ENCODE measurements at regions of chr13 and their contacts with region 1.

Region 1: GRCh38 chr13:19646062-19646461 is 12.6 kb downstream of the MPHOSPH8 start:
- DNase-seq: no peak
- H3K4me3 ChIP-seq: no peak overlapping the region
- H3K4me3 Mint-ChIP-seq: no peak overlapping the region
- H3K27ac Mint-ChIP-seq: no peak overlapping the region
- H3K4me1 ChIP-seq: no peaks in the 10 kb centered on the region
- H3K4me1 Mint-ChIP-seq: no peaks in the 10 kb centered on the region
- H3K27me3 ChIP-seq: no peaks in the 10 kb centered on the region
- H3K27me3 Mint-ChIP-seq: no peaks in the 10 kb centered on the region
- CTCF ChIP-seq: no peak

Region 2: DNA sequence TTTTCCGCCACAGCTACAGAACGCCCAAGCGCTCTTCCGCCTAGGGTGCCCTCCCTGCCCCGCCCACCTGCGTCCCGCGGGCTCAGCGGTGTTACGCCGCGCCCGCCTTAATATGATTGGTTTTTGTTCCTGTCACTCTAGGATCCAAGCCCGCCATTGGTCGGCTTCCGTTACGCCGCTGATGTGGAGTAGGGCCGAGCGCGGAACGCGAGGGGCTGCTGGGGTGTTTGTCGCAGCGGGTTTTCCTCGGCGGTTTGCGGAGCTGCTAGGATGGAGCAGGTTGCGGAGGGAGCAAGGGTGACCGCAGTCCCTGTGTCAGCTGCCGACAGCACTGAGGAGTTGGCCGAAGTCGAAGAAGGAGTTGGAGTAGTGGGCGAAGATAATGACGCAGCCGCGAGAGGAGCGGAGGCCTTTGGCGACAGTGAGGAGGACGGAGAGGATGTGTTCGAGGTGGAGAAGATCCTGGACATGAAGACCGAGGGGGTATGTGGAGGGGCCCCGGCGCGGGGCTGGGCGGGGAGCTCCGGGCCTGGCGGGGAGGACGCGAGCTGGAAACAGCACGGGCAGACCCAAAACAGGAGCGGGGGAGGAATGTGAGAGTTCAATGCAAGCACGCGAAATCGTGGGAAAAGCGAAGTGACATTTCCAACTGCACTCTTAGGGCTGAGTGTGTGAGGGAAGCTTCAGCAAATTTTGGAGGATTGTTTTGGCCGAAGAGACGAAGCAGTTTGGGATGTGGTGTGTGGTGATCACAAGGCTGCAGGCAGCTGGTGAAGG is 12.4 kb before region 1 on chr13 and contains the start of gene MPHOSPH8:
- CTCF ChIA-PET with region 1: no interaction called
- POLR2A ChIA-PET with region 1: no interaction called
- intact Hi-C with region 1: loop called (anchors 2 kb)
- DNase-seq: peak; percentile 97 to 98
- H3K4me3 ChIP-seq: peak within 1 kb of the TSS; percentile 69
- H3K4me3 Mint-ChIP-seq: peak within 1 kb of the TSS; percentile 92
- H3K27ac Mint-ChIP-seq: peak within 1 kb of the TSS; percentile 91
- H3K4me1 ChIP-seq: peaks cover 7% of the 10 kb centered on the region; the same call in 1 of the 2 replicates
- H3K4me1 Mint-ChIP-seq: peaks cover 5% of the 10 kb centered on the region
- H3K27me3 ChIP-seq: no peaks in the 10 kb centered on the region
- H3K27me3 Mint-ChIP-seq: no peaks in the 10 kb centered on the region
- CTCF ChIP-seq: no peak
- total RNA-seq, gene MPHOSPH8: 31.6 and 31.8 TPM in 2 replicates

Region 3: DNA sequence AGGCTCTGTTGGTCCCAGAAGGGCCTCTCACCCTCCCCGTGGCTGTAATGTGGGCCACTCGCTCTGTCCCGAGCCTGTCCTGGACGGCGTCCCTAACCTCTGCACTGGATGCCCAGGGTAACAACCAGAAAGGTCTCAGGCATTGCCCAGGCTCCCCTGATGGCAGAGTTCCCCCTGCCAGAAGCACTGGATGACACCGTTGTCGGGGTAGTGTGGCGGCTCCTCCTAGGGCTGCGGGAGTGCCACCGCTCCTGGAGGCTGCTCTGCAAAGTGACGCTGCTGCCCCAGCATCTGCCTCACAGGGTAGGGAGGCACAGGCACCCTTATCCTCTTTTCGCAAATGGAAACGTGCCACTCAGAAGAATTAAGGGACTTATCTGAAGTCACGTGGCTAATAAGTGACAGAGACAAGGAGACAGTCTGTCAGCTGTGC is 19.4 kb after region 1 on chr13:
- CTCF ChIA-PET with region 1: no interaction called
- POLR2A ChIA-PET with region 1: no interaction called
- intact Hi-C with region 1: no loop called
- DNase-seq: no peak
- H3K4me3 ChIP-seq: no peak overlapping the region
- H3K4me3 Mint-ChIP-seq: no peak overlapping the region
- H3K27ac Mint-ChIP-seq: peak overlapping the region; percentile 58
- H3K4me1 ChIP-seq: no peaks in the 10 kb centered on the region
- H3K4me1 Mint-ChIP-seq: peaks cover 11% of the 10 kb centered on the region
- H3K27me3 ChIP-seq: no peaks in the 10 kb centered on the region
- H3K27me3 Mint-ChIP-seq: no peaks in the 10 kb centered on the region
- CTCF ChIP-seq: no peak

Region 4: DNA sequence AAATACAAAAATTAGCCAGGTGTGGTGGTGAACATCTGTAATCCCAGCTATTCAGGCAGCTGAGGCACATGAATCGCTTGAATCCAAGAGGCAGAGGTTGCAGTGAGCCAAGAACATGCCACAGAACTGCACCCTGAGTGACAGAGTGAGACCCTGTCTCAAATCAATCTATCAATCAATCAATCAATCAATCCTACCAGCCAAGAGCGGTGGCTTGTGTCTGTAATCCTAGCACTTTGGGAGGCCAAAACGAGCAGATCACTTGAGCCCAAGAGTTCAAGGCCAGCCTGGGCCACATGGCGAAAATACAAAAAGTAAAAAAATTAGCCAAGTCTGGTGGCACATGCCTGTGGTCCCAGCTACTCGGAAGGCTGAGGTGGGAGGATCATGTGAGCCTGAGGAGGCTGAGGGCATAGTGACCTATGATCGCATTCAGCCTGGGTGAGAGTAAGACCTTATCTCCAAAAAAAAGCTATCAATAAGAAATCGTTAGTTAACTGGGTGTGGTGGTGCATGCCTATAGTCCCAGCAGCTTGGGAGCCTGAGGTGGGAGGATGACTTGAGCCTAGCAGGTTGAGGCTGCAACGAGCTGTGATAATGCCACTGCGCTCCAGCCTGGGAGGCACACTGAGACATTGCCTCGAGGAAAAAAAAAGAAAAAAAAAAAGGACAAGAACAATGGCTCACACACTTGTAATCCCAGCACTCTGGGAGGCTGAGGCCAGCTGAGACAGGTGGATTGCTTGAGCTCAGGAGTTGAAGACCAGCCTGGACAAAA is 120.3 kb after region 1 on chr13:
- CTCF ChIA-PET with region 1: no interaction called
- POLR2A ChIA-PET with region 1: no interaction called
- intact Hi-C with region 1: no loop called
- DNase-seq: peak in 1 of 2 experiments; percentile 47
- H3K4me3 ChIP-seq: no peak overlapping the region
- H3K4me3 Mint-ChIP-seq: no peak overlapping the region
- H3K27ac Mint-ChIP-seq: no peak overlapping the region
- H3K4me1 ChIP-seq: no peaks in the 10 kb centered on the region
- H3K4me1 Mint-ChIP-seq: peaks cover 10% of the 10 kb centered on the region
- H3K27me3 ChIP-seq: no peaks in the 10 kb centered on the region
- H3K27me3 Mint-ChIP-seq: no peaks in the 10 kb centered on the region
- CTCF ChIP-seq: no peak